HepG2 (cell line): ENCODE measurements at regions of chr22 and their contacts with region 1.

Region 1: DNA sequence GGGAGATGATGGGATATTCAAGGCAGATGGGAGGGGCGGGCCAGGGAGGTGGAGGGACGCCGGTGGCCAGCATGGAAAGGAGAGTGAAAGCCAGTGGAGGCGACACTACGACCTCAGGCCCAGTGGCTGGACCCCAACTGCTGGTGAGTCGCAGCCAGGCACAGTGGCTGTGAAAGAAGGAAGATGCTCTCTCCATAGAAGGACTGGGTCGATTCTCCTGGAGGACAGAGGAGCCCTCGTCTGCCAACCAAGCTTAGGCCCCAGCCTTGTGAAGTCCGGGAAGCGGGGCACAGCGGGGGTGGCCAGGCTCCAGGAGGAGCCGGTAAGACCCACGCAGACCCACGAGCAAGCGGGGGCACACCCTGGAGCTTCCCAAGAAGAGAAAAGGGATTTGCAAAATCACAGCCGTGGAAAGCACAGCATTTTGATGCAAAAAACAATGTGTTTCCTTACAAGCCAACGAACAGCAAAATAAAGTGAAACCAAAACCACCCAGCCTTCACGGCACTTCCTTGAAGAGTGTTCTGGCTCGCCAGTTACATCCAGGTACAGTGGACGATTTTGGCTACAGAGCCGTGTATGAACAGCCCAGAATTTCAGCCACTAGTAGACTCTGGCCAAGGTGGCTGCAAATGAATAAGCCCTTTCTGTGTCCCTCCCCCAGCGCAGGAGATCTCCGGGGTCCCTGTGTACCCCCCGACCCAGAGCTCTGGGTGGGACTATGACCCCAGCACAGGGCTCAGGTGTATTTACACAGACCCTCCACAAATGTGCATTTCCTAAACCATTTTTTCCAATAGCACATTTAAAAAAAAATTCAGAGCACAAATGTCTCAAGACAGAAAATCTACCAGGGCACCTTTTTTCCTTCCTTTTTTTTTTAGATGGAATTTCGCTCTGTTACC is 96.9 kb downstream of the TRMU start:
- DNase-seq: no peak
- ATAC-seq: no peak
- H3K4me3 ChIP-seq: no peak overlapping the region
- H3K27ac ChIP-seq: no peak overlapping the region
- H3K4me1 ChIP-seq: peaks cover 65% of the 10 kb centered on the region
- H3K27me3 ChIP-seq: no peaks in the 10 kb centered on the region
- CTCF ChIP-seq: no peak
- EP300 ChIP-seq: no peak
- POLR2A ChIP-seq: no peak
- RAD21 ChIP-seq: no peak

Region 2: DNA sequence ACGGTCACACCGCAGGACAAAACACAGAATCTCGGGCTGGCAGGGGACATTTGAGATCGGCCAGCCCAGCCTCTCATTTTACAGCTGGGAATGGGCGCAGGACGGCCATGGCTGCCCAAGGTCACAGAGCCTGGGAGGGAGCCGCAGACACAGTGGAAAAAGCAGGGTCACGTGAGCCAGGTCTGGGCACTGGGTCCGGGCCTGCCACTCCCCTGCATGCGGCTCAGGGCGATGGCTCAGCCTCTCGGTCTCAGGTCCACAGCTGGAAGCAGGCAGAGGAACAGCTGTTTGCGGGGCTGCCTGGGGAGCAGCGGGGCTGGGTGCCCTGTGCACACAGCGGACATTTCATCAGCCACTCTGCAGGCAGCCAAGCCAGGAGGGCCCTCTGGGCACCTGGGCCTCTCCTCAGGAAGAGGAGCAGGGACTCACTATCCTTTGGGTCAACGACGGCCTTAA is 292.5 kb before region 1 on chr22:
- CTCF ChIA-PET with region 1: no interaction called
- POLR2A ChIA-PET with region 1: no interaction called
- in situ Hi-C with region 1: no loop called
- intact Hi-C with region 1: no loop called
- DNase-seq: peak; percentile 58
- ATAC-seq: peak; percentile 62
- H3K4me3 ChIP-seq: peak overlapping the region in 2 of 3 experiments; percentile 35 to 57; a peak in 3 of 6 replicates
- H3K27ac ChIP-seq: no peak overlapping the region
- H3K4me1 ChIP-seq: peaks cover 74% of the 10 kb centered on the region
- H3K27me3 ChIP-seq: no peaks in the 10 kb centered on the region; a peak in 2 of 5 replicates
- CTCF ChIP-seq: no peak
- EP300 ChIP-seq: no peak
- POLR2A ChIP-seq: no peak
- RAD21 ChIP-seq: no peak

Region 3: GRCh38 chr22:46262449-46263232 is 169.8 kb before region 1 on chr22:
- CTCF ChIA-PET with region 1: no interaction called
- POLR2A ChIA-PET with region 1: no interaction called
- in situ Hi-C with region 1: no loop called
- intact Hi-C with region 1: no loop called
- DNase-seq: no peak
- ATAC-seq: no peak
- H3K4me3 ChIP-seq: no peak overlapping the region
- H3K27ac ChIP-seq: no peak overlapping the region
- H3K4me1 ChIP-seq: peaks cover 26% of the 10 kb centered on the region
- H3K27me3 ChIP-seq: no peaks in the 10 kb centered on the region
- CTCF ChIP-seq: no peak
- EP300 ChIP-seq: no peak
- POLR2A ChIP-seq: no peak
- RAD21 ChIP-seq: no peak

Region 4: DNA sequence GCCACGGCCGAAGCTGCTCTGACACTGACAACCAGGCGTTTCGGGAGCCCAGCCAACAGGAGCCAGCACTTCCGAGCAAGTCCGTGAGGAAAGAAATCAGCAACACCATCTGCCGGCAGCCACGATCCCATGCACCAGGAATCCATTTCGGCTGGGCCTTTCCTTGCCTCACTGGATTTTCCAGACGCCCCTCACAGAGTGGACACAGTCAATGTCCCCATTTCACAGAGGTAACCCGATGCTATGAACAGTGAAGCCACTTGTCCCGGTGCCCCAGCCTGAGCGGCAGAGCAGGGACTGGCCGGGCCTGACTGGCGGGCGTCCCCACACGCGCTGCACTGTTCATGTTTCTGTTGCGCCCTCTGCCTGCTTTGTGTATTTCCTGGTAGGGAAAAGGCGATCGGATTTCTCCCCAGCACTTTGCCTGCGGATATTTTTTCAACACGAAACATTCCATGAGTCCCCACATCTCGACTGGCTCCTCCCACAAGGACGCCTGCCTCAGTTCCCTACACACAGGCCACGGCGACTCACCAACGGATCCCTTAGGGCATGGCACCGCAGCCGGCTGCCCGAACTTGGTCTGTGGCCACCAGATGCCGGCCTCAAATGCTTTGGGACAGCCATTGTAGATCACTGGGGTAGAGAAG is 41.6 kb before region 1 on chr22:
- CTCF ChIA-PET with region 1: no interaction called
- POLR2A ChIA-PET with region 1: no interaction called
- in situ Hi-C with region 1: no loop called
- intact Hi-C with region 1: no loop called
- DNase-seq: peak; percentile 64
- ATAC-seq: peak; percentile 86
- H3K4me3 ChIP-seq: peak overlapping the region in 2 of 3 experiments; percentile 47 to 58; a peak in 4 of 6 replicates
- H3K27ac ChIP-seq: no peak overlapping the region
- H3K4me1 ChIP-seq: peaks cover 21% of the 10 kb centered on the region
- H3K27me3 ChIP-seq: no peaks in the 10 kb centered on the region
- CTCF ChIP-seq: peak; percentile 89
- EP300 ChIP-seq: no peak
- POLR2A ChIP-seq: no peak
- RAD21 ChIP-seq: peak; percentile 95

Region 5: GRCh38 chr22:46444390-46444854 is 12.0 kb after region 1 on chr22:
- CTCF ChIA-PET with region 1: no interaction called
- POLR2A ChIA-PET with region 1: interaction called, 19 read pairs
- in situ Hi-C with region 1: no loop called
- intact Hi-C with region 1: no loop called
- DNase-seq: peak; percentile 65
- ATAC-seq: peak; percentile 96
- H3K4me3 ChIP-seq: peak overlapping the region; percentile 14 to 62 (median 34); a peak in 5 of 6 replicates
- H3K27ac ChIP-seq: no peak overlapping the region
- H3K4me1 ChIP-seq: peaks cover 31% of the 10 kb centered on the region
- H3K27me3 ChIP-seq: no peaks in the 10 kb centered on the region; a peak in 1 of 5 replicates
- CTCF ChIP-seq: peak; percentile 73
- EP300 ChIP-seq: no peak
- POLR2A ChIP-seq: no peak
- RAD21 ChIP-seq: peak; percentile 72; the same call in 1 of the 2 replicates

Region 6: GRCh38 chr22:46476547-46476941 is 44.1 kb after region 1 on chr22:
- CTCF ChIA-PET with region 1: no interaction called
- POLR2A ChIA-PET with region 1: no interaction called
- in situ Hi-C with region 1: no loop called
- intact Hi-C with region 1: no loop called
- DNase-seq: no peak
- ATAC-seq: no peak
- H3K4me3 ChIP-seq: no peak overlapping the region
- H3K27ac ChIP-seq: no peak overlapping the region
- H3K4me1 ChIP-seq: peaks cover 12% of the 10 kb centered on the region
- H3K27me3 ChIP-seq: peaks cover 6 to 9% of the 10 kb centered on the region in 2 experiments; a peak in 3 of 5 replicates
- CTCF ChIP-seq: no peak
- EP300 ChIP-seq: no peak
- POLR2A ChIP-seq: no peak
- RAD21 ChIP-seq: no peak